ENCODE measurements at regions of chr1 and their contacts with region 1.

Region 1: GRCh38 chr1:46724991-46725735 is 6.2 kb upstream of the EFCAB14 start:
- DNase-seq: no peak
- H3K4me3 ChIP-seq: no peak overlapping the region
- H3K27ac ChIP-seq: no peak overlapping the region
- H3K4me1 ChIP-seq: peaks cover 5 to 8% (median 6%) of the 10 kb centered on the region in 4 donors
- H3K27me3 ChIP-seq: peaks cover 0 to 17% (median 0%) of the 10 kb centered on the region in 4 donors
- CTCF ChIP-seq: peak; percentile 75 to 91 (median 88)
- EP300 ChIP-seq: no peak
- POLR2A ChIP-seq: no peak

Region 2: DNA sequence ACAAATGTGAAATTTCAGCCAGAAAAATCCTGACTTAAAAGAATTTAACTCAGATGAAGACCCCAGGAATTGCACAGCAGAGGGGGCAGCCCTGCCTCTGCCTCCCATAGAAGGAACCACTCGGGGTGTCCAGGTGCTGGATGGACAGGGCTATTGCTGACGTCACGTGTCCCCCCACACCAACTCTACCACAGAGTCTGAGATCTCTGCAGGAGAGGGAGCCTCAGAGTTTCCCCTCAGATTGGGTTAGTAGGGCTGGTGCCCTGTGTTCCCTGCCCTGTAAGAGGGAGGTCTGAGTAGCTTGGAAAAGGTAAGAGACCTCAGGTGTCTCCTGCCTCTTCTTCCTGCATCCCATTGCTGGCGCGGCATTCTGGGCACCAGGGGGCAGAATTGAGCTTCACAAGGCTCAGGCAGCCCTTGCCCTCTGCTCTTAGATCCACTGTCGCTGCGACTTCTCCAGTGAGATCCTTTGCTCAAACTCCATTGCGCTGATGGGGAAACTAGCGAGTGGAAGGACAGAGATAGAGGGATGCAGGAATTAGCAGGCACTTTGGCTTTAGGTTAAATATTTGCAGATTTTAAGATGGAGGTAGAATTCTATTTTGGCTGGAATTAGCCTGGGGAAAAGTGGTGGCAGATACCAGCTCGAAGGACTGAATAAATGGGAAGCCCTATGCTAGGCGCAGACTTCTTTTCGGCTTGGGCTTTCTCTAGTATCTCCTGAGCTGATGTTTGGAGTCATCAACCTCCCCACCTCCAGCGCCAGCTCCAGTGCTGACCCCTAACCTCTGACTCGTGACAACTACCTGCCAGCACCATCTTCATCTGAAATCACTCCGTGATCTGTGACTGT is 278.3 kb before region 1 on chr1:
- intact Hi-C with region 1: loop called (anchors 2 kb)
- DNase-seq: no peak
- H3K4me3 ChIP-seq: no peak overlapping the region
- H3K27ac ChIP-seq: no peak overlapping the region
- H3K4me1 ChIP-seq: peaks cover 4 to 27% (median 25%) of the 10 kb centered on the region in 4 donors
- H3K27me3 ChIP-seq: peaks cover 0 to 58% (median 15%) of the 10 kb centered on the region in 4 donors
- CTCF ChIP-seq: peak; percentile 77 to 87 (median 86)
- EP300 ChIP-seq: no peak
- POLR2A ChIP-seq: no peak

Region 3: GRCh38 chr1:46595127-46595526 is 130.0 kb before region 1 on chr1:
- intact Hi-C with region 1: no loop called
- DNase-seq: peak; percentile 93
- H3K4me3 ChIP-seq: no peak overlapping the region
- H3K27ac ChIP-seq: peak overlapping the region in 3 of 4 donors; percentile 52 to 71 (median 58)
- H3K4me1 ChIP-seq: peaks cover 0 to 27% (median 15%) of the 10 kb centered on the region in 4 donors
- H3K27me3 ChIP-seq: no peaks in the 10 kb centered on the region
- CTCF ChIP-seq: no peak
- EP300 ChIP-seq: no peak
- POLR2A ChIP-seq: no peak

Region 4: GRCh38 chr1:46622344-46622743 is 102.8 kb before region 1 on chr1:
- intact Hi-C with region 1: loop called (anchors 2 kb)
- DNase-seq: no peak
- H3K4me3 ChIP-seq: no peak overlapping the region
- H3K27ac ChIP-seq: no peak overlapping the region
- H3K4me1 ChIP-seq: peaks cover 6 to 22% (median 12%) of the 10 kb centered on the region in 4 donors
- H3K27me3 ChIP-seq: no peaks in the 10 kb centered on the region
- CTCF ChIP-seq: peak; percentile 46 to 69 (median 63)
- EP300 ChIP-seq: no peak
- POLR2A ChIP-seq: no peak

Measured in esophagus muscularis mucosa (tissue), 4 donors.